Sciatic nerve (tissue), 2 donors: ENCODE measurements at regions of chr3 and their contacts with region 1.

Region 1: GRCh38 chr3:6921066-6921465 is 60.2 kb downstream of the GRM7 start:
- DNase-seq: no peak
- ATAC-seq: no peak

Region 2: DNA sequence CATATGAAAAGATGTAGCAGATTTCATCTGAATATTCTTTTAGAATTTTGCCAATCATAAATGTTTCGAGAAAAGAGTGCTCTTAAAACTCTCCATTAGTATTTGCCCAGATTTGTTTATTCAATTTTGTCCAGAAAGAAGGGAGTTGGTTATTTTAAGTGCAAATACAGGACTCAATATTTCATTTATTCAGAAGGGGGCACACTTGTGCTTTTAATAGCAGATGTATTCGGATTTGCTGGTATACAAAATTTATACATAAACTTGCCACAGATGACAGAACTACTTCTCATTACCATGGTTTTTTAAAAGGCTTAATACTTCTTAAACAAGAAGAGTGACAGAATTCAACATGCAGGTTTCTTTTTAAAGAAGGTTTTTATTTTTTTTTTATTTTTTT is 129.9 kb before region 1 on chr3:
- intact Hi-C with region 1: no loop called
- DNase-seq: no peak
- ATAC-seq: no peak

Region 3: DNA sequence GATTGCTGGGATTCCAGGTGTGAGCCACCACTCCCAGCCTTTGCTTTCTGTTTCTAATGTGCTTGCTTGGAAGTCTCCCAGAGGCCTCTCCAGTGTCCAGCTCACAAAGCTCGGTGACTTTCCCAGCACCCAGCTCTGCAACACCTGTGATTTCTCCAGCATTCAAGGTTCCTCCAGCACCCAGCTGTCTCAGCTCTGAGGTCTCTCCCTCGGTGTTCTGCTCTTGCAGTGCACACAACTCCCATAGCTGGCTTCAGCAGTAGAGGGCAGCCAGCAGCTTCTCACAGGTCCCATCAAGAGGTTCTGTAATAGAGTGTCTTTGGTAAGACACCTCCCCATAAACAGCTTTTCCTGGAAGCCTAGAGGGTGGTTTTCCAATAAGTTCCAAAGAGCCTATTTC is 14.9 kb after region 1 on chr3:
- intact Hi-C with region 1: loop called (anchors 2 kb)
- DNase-seq: no peak
- ATAC-seq: no peak